Naive thymus-derived CD4-positive, alpha-beta T cell (primary cell): ENCODE measurements at regions of chr2 and their contacts with region 1.

Region 1: GRCh38 chr2:202750763-202751427 is 116.1 kb downstream of the FAM117B start:
- DNase-seq: peak in 5 of 9 donors; percentile 14 to 40 (median 22)
- ATAC-seq: no peak
- H3K4me3 ChIP-seq: no peak overlapping the region
- H3K4me3 Mint-ChIP-seq: peak overlapping the region in 9 of 10 donors; percentile 18 to 80 (median 67)
- H3K27ac ChIP-seq: peak overlapping the region; percentile 52
- H3K27ac Mint-ChIP-seq: peak overlapping the region in 8 of 9 donors; percentile 18 to 97 (median 88)
- H3K4me1 ChIP-seq: peaks cover 0 to 17% of the 10 kb centered on the region in 2 donors
- H3K4me1 Mint-ChIP-seq: peaks cover 8 to 90% (median 80%) of the 10 kb centered on the region in 7 donors
- H3K27me3 ChIP-seq: no peaks in the 10 kb centered on the region
- H3K27me3 Mint-ChIP-seq: no peaks in the 10 kb centered on the region

Region 2: DNA sequence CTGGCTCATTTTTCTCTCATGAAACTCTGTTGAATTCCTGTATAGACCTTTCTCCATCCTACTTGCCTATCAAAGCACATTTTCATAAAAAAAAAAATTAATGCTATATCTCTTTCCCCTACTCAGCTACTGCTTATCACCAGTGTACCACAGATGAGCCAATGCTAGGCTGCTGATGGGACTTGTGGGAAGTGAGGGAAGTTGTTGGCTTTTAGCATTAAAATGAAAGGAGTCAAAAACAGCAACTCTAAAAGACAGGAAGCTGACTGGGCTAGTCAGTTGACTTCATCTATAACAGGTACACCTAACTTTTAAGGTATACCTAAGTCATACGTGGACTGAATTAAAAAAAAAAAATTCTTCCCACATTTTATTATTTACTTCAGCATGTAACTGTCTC is 14.1 kb before region 1 on chr2:
- CTCF ChIA-PET with region 1: no interaction called
- POLR2A ChIA-PET with region 1: interaction called, 5 read pairs
- intact Hi-C with region 1: loop called in 1 of 2 experiments (anchors 2 kb)
- DNase-seq: peak in 2 of 9 donors; percentile 10 to 25
- ATAC-seq: no peak
- H3K4me3 ChIP-seq: no peak overlapping the region
- H3K4me3 Mint-ChIP-seq: peak overlapping the region in 7 of 10 donors; percentile 22 to 79 (median 51)
- H3K27ac ChIP-seq: no peak overlapping the region
- H3K27ac Mint-ChIP-seq: peak overlapping the region in 7 of 9 donors; percentile 14 to 88 (median 81)
- H3K4me1 ChIP-seq: peaks cover 0 to 14% of the 10 kb centered on the region in 2 donors
- H3K4me1 Mint-ChIP-seq: peaks cover 0 to 50% (median 42%) of the 10 kb centered on the region in 7 donors
- H3K27me3 ChIP-seq: no peaks in the 10 kb centered on the region
- H3K27me3 Mint-ChIP-seq: no peaks in the 10 kb centered on the region